ENCODE measurements at regions of chr1 and their contacts with region 1.

Region 1: DNA sequence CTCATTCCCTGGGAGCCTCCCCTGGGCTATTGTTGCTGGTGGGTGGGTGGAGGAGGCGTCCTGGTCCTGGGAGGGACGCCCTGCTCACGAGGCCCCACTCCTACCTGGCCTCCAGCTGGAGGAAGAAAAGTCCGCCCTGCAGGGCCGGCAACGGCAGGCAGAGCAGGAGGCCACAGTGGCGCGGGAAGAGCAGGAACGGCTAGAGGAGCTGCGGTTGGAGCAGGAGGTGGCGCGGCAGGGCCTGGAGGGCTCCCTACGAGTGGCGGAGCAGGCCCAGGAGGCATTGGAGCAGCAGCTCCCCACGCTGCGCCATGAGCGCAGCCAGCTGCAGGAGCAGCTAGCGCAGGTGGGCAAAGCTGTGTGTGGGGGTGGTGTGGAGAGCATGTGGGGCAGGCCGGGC is 24.9 kb downstream of the CROCC start:
- DNase-seq: no peak
- H3K4me3 ChIP-seq: no peak overlapping the region
- H3K27ac ChIP-seq: no peak overlapping the region
- H3K4me1 ChIP-seq: no peaks in the 10 kb centered on the region
- H3K27me3 ChIP-seq: no peaks in the 10 kb centered on the region
- CTCF ChIP-seq: no peak
- POLR2A ChIP-seq: no peak

Region 2: GRCh38 chr1:16621300-16621658 is 325.4 kb before region 1 on chr1:
- intact Hi-C with region 1: loop called (anchors 5 kb)
- DNase-seq: no peak
- H3K4me3 ChIP-seq: no peak overlapping the region
- H3K27ac ChIP-seq: no peak overlapping the region
- H3K4me1 ChIP-seq: peaks cover 14% of the 10 kb centered on the region
- H3K27me3 ChIP-seq: no peaks in the 10 kb centered on the region
- CTCF ChIP-seq: no peak
- POLR2A ChIP-seq: no peak